ENCODE measurements at regions of chr20 and their contacts with region 1.

Region 1: GRCh38 chr20:31605031-31605901 is at the start of gene ID1:
- DNase-seq: peak; percentile 94
- H3K4me3 Mint-ChIP-seq: peak within 1 kb of the TSS; percentile 88
- H3K27ac Mint-ChIP-seq: peak within 1 kb of the TSS; percentile 33
- H3K4me1 Mint-ChIP-seq: peaks cover 33% of the 10 kb centered on the region
- H3K27me3 Mint-ChIP-seq: peaks cover 95% of the 10 kb centered on the region

Region 2: DNA sequence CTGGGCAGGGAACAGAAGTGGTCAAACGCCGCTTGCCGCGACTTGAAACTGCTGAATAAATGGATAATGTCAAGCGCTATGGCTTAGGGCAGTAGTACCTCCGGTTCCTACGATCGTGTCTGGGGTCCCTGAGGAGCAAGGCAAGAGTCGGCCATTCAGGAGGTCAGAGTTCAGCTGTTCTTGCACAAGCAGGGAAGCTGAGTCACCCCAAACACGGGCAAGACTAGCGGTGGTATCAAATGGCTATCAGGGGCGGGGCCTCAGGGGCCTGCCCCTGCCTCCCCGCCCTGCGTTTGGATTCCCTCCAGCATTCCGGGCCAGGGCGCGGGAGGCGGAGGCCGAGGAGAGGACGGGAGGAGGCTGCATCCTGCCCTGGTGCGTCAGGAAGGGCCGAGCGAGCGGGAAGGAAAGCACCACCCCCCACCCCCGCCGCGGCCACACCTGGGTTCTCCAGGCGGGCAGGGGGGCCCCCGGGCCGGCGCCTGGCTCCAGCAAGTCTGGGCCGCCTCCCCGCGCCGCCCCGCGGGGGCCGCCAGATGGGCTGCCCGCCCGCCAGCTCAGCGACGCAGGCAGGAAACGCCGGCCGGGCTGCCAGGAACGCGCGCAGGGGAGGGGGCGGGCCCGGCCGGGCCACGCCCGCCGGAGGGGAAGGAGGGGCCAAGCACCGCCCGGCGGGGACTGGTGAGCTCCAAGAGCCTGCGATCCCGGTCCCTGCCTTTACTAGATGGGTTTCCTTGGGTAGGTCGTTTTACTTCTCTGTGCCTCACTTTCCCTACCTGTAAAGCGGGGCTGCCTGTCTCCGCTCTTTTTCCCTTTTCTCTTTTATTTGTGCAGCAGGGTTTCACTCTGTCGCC is 32.3 kb before region 1 on chr20:
- CTCF ChIA-PET with region 1: interaction called, 853 read pairs
- DNase-seq: peak; percentile 91
- H3K4me3 Mint-ChIP-seq: peak overlapping the region; percentile 84
- H3K27ac Mint-ChIP-seq: peak overlapping the region; percentile 85
- H3K4me1 Mint-ChIP-seq: peaks cover 27% of the 10 kb centered on the region
- H3K27me3 Mint-ChIP-seq: peaks cover 11% of the 10 kb centered on the region

Region 3: DNA sequence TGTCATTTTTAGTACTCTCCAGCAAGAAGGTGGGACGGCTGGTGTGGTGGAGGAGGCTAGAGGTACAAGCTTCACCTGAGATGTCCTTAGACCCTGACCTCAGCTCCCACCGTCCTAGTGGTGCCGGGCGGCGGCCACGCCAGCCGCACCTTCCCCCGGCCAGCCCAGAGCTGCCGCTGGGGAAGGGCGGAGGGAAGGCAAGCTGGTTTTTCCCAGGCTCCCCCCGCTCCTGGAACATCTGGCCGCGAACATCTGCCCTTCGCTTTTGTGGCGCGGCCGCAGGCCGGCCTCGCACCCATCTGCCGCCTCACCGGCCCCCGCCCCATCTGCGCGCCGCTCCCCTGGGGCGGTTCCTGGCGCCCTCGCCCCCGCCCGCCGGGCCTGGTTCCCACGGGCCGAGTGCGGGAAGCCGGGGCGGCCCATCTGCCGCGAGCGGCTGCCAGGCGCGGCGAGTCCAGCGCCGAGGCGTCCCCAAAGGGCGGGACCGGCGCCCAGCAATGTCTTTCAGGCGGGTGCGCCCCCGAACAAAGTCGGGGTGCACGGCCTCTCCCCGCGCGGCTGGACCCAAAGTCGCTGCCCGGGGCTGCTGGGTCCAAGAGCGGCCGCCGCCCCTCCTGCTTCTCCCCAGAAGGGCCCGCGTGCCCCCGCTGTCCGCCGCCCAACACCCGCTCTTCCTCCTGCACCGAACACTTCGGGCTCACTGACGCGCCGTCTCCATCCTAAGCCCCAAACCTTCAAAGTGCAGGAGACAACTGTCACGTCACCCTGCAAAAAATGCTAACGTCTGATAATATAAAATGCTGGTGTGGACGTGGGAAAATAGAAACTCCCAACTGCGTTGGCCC is 17.5 kb before region 1 on chr20:
- CTCF ChIA-PET with region 1: interaction called, 31 read pairs
- DNase-seq: no peak
- H3K4me3 Mint-ChIP-seq: peak overlapping the region; percentile 55
- H3K27ac Mint-ChIP-seq: no peak overlapping the region
- H3K4me1 Mint-ChIP-seq: peaks cover 8% of the 10 kb centered on the region
- H3K27me3 Mint-ChIP-seq: peaks cover 68% of the 10 kb centered on the region